Naive thymus-derived CD4-positive, alpha-beta T cell (primary cell): ENCODE measurements at regions of chr12 and their contacts with region 1.

Region 1: GRCh38 chr12:3658327-3659163 is 94.4 kb downstream of the CRACR2A start:
- DNase-seq: peak in 6 of 9 donors; percentile 12 to 51 (median 35)
- ATAC-seq: peak; percentile 48
- H3K4me3 ChIP-seq: no peak overlapping the region
- H3K4me3 Mint-ChIP-seq: no peak overlapping the region
- H3K27ac ChIP-seq: no peak overlapping the region
- H3K27ac Mint-ChIP-seq: peak overlapping the region in 1 of 9 donors; percentile 58
- H3K4me1 ChIP-seq: no peaks in the 10 kb centered on the region
- H3K4me1 Mint-ChIP-seq: peaks cover 0 to 3% (median 0%) of the 10 kb centered on the region in 7 donors
- H3K27me3 ChIP-seq: no peaks in the 10 kb centered on the region
- H3K27me3 Mint-ChIP-seq: no peaks in the 10 kb centered on the region

Region 2: GRCh38 chr12:3685830-3686229 is 27.3 kb after region 1 on chr12:
- CTCF ChIA-PET with region 1: no interaction called
- POLR2A ChIA-PET with region 1: no interaction called
- intact Hi-C with region 1: no loop called
- DNase-seq: no peak
- ATAC-seq: no peak
- H3K4me3 ChIP-seq: no peak overlapping the region
- H3K4me3 Mint-ChIP-seq: no peak overlapping the region
- H3K27ac ChIP-seq: no peak overlapping the region
- H3K27ac Mint-ChIP-seq: peak overlapping the region in 1 of 9 donors; percentile 20
- H3K4me1 ChIP-seq: no peaks in the 10 kb centered on the region
- H3K4me1 Mint-ChIP-seq: peaks cover 0 to 14% (median 0%) of the 10 kb centered on the region in 7 donors
- H3K27me3 ChIP-seq: no peaks in the 10 kb centered on the region
- H3K27me3 Mint-ChIP-seq: no peaks in the 10 kb centered on the region

Region 3: GRCh38 chr12:3727877-3728632 is 69.5 kb after region 1 on chr12:
- CTCF ChIA-PET with region 1: no interaction called
- POLR2A ChIA-PET with region 1: no interaction called
- intact Hi-C with region 1: loop called in 1 of 2 experiments (anchors 5 kb)
- DNase-seq: peak in 8 of 9 donors; percentile 17 to 61 (median 36)
- ATAC-seq: peak; percentile 84
- H3K4me3 ChIP-seq: no peak overlapping the region
- H3K4me3 Mint-ChIP-seq: peak overlapping the region in 9 of 10 donors; percentile 34 to 87 (median 52)
- H3K27ac ChIP-seq: no peak overlapping the region
- H3K27ac Mint-ChIP-seq: peak overlapping the region; percentile 52 to 97 (median 79)
- H3K4me1 ChIP-seq: peaks cover 8 to 25% of the 10 kb centered on the region in 2 donors
- H3K4me1 Mint-ChIP-seq: peaks cover 27 to 47% (median 40%) of the 10 kb centered on the region in 7 donors
- H3K27me3 ChIP-seq: no peaks in the 10 kb centered on the region
- H3K27me3 Mint-ChIP-seq: no peaks in the 10 kb centered on the region

Region 4: GRCh38 chr12:3777206-3777809 is 118.8 kb after region 1 on chr12:
- CTCF ChIA-PET with region 1: interaction called, 3 read pairs
- POLR2A ChIA-PET with region 1: no interaction called
- intact Hi-C with region 1: loop called (anchors 1 to 2 kb)
- DNase-seq: peak in 6 of 9 donors; percentile 26 to 46 (median 33)
- ATAC-seq: peak; percentile 52
- H3K4me3 ChIP-seq: no peak overlapping the region
- H3K4me3 Mint-ChIP-seq: no peak overlapping the region
- H3K27ac ChIP-seq: no peak overlapping the region
- H3K27ac Mint-ChIP-seq: no peak overlapping the region
- H3K4me1 ChIP-seq: no peaks in the 10 kb centered on the region
- H3K4me1 Mint-ChIP-seq: peaks cover 3 to 10% (median 5%) of the 10 kb centered on the region in 7 donors
- H3K27me3 ChIP-seq: no peaks in the 10 kb centered on the region
- H3K27me3 Mint-ChIP-seq: peaks cover 0 to 4% (median 0%) of the 10 kb centered on the region in 5 donors

Region 5: DNA sequence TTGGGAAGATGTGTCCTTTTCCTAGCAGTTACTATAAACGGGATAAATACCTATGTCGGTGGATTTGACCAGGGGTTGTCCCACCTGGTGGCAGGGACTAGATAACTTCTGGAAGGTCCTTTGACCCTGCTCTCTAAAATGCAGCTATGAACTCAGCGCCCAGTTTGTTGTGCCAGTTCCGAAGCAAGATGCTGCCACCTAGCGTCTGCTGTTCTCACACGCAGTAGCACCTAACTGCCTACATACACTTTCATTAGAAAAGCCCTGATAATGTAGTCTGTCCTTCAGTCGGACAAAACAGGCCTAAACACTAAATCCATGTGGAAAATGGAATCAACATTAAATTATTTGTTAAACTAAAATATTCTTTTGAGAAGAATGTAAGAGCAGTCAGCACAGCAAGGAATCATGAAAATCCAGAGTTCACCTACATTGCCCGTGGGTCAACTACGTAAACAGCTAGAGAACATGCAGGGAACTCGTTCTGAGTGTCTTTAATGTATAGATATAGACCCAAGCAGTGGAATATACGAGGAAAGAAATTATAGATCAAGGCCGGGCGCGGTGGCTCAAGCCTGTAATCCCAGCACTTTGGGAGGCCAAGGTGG is 145.4 kb after region 1 on chr12:
- CTCF ChIA-PET with region 1: interaction called, 6 read pairs
- POLR2A ChIA-PET with region 1: no interaction called
- intact Hi-C with region 1: loop called (anchors 1 kb)
- DNase-seq: peak; percentile 27 to 63 (median 55)
- ATAC-seq: peak; percentile 82
- H3K4me3 ChIP-seq: no peak overlapping the region
- H3K4me3 Mint-ChIP-seq: no peak overlapping the region
- H3K27ac ChIP-seq: no peak overlapping the region
- H3K27ac Mint-ChIP-seq: no peak overlapping the region
- H3K4me1 ChIP-seq: no peaks in the 10 kb centered on the region
- H3K4me1 Mint-ChIP-seq: peaks cover 0 to 9% (median 0%) of the 10 kb centered on the region in 7 donors
- H3K27me3 ChIP-seq: no peaks in the 10 kb centered on the region
- H3K27me3 Mint-ChIP-seq: no peaks in the 10 kb centered on the region